Activated CD4-positive, alpha-beta T cell treated with anti-CD3 and anti-CD28 coated beads, Interleukin-2, amount 10 ng/mL, durations not matched to agents 24 days and 14 days (primary cell): ENCODE measurements at regions of chr11 and their contacts with region 1.

Region 1: DNA sequence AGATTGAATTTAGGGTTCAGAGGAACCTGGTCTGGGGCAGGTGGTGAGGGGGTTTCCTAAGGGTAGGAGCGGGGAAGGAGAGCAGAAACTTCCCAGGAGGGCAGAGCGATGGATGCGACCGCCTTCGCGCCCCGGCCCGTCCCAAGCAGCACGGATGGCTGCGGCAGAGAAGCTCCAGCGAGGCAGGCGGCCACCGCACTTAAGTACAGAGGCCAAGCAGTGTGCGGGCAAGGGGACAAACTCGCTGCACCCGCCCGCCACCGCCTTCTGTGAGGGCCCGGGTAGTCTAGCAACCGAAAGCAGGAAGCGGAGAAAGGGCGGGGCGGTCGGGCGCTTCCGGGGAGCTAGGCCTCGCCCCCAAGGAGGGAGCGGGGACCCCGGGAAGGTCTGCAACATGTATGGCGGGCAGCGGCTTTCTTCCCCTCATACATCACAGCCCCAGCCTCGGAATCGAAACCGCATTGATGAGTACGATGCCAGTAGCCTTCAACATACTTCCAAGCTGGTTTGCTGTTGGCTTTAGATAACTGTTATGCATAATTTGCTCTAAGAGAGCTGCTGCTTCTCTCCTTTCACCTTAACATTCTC is at the start of gene AGBL2:
- DNase-seq: peak; percentile 97
- H3K4me3 Mint-ChIP-seq: peak within 1 kb of the TSS; percentile 91
- H3K27ac Mint-ChIP-seq: peak within 1 kb of the TSS; percentile 94
- H3K4me1 Mint-ChIP-seq: peaks cover 18% of the 10 kb centered on the region
- H3K27me3 Mint-ChIP-seq: no peaks in the 10 kb centered on the region
- total RNA-seq, gene AGBL2: 4.2 and 4.5 TPM in 2 replicates

Region 2: DNA sequence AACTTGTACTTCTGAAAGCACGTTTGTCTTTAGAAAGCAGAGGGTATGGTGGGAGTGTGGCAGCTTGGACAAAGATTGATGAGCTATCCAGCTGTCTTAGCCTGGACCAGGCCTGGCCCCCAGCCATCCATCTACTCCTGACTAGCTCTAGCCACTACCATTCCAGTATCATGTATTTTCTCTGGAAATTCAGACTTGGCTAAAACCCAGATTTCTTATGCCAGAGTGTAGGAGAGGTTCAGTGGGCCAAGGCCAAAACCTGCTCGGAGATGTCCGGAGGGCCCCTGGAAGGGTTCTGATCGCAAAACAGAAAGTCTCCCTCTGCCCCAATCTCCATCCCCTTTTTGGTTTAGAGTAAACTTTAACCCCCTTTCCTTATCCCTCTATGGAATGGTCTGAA is 48.0 kb before region 1 on chr11:
- intact Hi-C with region 1: loop called (anchors 2 kb)
- DNase-seq: no peak
- H3K4me3 Mint-ChIP-seq: no peak overlapping the region
- H3K27ac Mint-ChIP-seq: peak overlapping the region; percentile 16
- H3K4me1 Mint-ChIP-seq: peaks cover 9% of the 10 kb centered on the region
- H3K27me3 Mint-ChIP-seq: no peaks in the 10 kb centered on the region

Region 3: DNA sequence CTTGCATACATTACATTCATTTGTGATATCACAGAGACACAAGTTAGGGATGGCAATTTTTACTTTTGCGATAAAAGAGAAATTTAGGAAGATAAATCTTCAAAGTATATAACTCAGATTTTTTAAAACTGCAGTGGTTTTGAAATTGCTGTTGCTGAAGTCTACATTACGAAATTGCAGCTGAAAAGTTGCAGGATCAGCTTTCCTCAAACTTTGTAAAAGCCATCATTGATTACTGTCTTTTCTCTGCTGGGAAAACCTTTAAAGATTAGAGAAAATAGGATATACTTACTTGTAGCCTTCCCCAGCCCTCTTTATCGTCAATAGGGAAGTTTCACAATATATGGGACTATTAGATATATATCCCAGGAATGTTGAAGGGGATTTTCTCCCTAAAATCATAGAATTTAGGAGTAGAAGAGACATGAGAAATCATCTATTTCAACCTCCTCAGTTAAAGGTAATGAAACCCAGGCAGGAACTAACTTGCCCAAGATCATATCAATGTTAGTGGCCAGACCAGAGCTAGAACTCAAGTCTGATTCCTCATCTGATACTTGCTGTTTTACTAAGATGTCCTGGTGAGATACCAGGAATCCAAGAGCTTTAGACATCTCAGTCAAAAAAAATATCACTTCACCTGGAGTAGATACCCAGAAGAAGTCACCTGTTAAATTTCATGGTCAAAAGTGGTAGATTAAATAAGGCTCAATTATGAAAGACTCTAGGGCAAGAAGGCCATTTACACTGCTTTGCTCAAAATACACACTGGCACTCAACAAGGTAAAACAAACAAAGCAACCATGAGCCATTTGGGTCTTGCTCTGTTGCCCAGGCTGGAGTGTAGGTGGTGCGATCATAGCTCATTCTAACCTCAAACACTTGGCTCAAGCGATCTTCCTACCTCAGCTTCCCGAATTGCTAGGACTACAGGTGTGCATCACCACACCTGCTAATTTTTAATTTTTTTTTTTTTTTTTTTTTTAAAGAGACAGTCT is 10.6 kb after region 1 on chr11:
- intact Hi-C with region 1: no loop called
- DNase-seq: no peak
- H3K4me3 Mint-ChIP-seq: no peak overlapping the region
- H3K27ac Mint-ChIP-seq: peak overlapping the region; percentile 35
- H3K4me1 Mint-ChIP-seq: no peaks in the 10 kb centered on the region
- H3K27me3 Mint-ChIP-seq: no peaks in the 10 kb centered on the region

Region 4: GRCh38 chr11:47847892-47848635 is 132.9 kb after region 1 on chr11 and contains the start of gene NUP160:
- intact Hi-C with region 1: loop called (anchors 2 kb)
- DNase-seq: peak; percentile 98
- H3K4me3 Mint-ChIP-seq: peak within 1 kb of the TSS; percentile 99
- H3K27ac Mint-ChIP-seq: peak within 1 kb of the TSS; percentile 99
- H3K4me1 Mint-ChIP-seq: peaks cover 38% of the 10 kb centered on the region
- H3K27me3 Mint-ChIP-seq: no peaks in the 10 kb centered on the region
- total RNA-seq, gene NUP160: 102 and 104 TPM in 2 replicates